WTC11 (cell line): ENCODE measurements at regions of chr18 and their contacts with region 1.

Region 1: GRCh38 chr18:26458526-26459232 is 89.7 kb downstream of the KCTD1 start:
- DNase-seq: no peak
- ATAC-seq: no peak
- H3K4me3 Mint-ChIP-seq: no peak overlapping the region
- H3K27ac Mint-ChIP-seq: 0 out of 2 replicates have a peak overlapping the region, but pooled peaks have one; percentile 10
- H3K4me1 Mint-ChIP-seq: peaks cover 28% of the 10 kb centered on the region
- H3K27me3 Mint-ChIP-seq: peaks cover 9% of the 10 kb centered on the region; the same call in 1 of the 2 replicates
- CTCF ChIP-seq: no peak

Region 2: GRCh38 chr18:26405190-26405801 is 53.4 kb before region 1 on chr18:
- CTCF ChIA-PET with region 1: interaction called, 11 read pairs
- POLR2A ChIA-PET with region 1: no interaction called
- DNase-seq: peak; percentile 31
- ATAC-seq: peak; percentile 74
- H3K4me3 Mint-ChIP-seq: no peak overlapping the region
- H3K27ac Mint-ChIP-seq: no peak overlapping the region
- H3K4me1 Mint-ChIP-seq: peaks cover 37% of the 10 kb centered on the region
- H3K27me3 Mint-ChIP-seq: no peaks in the 10 kb centered on the region
- CTCF ChIP-seq: no peak

Region 3: DNA sequence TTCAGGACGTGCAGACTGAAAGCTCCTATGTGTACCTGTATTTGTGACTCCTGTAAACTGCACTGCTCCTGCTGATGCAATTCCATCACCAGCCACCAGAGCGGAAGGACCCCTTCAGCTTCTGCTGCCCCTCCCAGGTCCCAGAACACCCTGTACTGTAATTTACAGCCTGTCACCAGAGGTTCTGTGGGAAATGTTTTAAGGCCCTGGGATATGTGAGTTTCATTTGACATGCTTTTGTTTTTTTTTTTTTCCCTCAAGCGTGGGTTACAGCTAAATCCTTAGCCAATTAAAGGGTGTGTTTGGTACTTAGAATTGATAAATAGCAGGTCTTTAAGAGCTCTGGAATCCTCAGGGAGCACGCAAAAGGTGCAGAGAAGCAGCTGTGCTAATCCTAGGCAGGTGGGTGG is 10.3 kb after region 1 on chr18:
- CTCF ChIA-PET with region 1: interaction called, 11 read pairs
- POLR2A ChIA-PET with region 1: no interaction called
- DNase-seq: peak; percentile 77
- ATAC-seq: peak; percentile 97
- H3K4me3 Mint-ChIP-seq: no peak overlapping the region
- H3K27ac Mint-ChIP-seq: no peak overlapping the region
- H3K4me1 Mint-ChIP-seq: peaks cover 20% of the 10 kb centered on the region
- H3K27me3 Mint-ChIP-seq: no peaks in the 10 kb centered on the region
- CTCF ChIP-seq: peak; percentile 81